ENCODE measurements at regions of chr3 and their contacts with region 1.

Region 1: GRCh38 chr3:52770496-52771333 is at the start of gene NEK4:
- DNase-seq: peak; percentile 85
- ATAC-seq: peak; percentile 91
- H3K4me3 ChIP-seq: peak within 1 kb of the TSS; percentile 52 to 89 (median 72)
- H3K27ac ChIP-seq: peak within 1 kb of the TSS; percentile 80
- H3K4me1 ChIP-seq: peaks cover 60% of the 10 kb centered on the region
- H3K27me3 ChIP-seq: no peaks in the 10 kb centered on the region
- CTCF ChIP-seq: peak; percentile 29
- EP300 ChIP-seq: no peak; a peak in 1 of 4 replicates
- POLR2A ChIP-seq: peak; percentile 85 to 93
- RAD21 ChIP-seq: peak; percentile 83
- total RNA-seq, gene NEK4: 38.0 and 38.5 TPM in 2 replicates

Region 2: DNA sequence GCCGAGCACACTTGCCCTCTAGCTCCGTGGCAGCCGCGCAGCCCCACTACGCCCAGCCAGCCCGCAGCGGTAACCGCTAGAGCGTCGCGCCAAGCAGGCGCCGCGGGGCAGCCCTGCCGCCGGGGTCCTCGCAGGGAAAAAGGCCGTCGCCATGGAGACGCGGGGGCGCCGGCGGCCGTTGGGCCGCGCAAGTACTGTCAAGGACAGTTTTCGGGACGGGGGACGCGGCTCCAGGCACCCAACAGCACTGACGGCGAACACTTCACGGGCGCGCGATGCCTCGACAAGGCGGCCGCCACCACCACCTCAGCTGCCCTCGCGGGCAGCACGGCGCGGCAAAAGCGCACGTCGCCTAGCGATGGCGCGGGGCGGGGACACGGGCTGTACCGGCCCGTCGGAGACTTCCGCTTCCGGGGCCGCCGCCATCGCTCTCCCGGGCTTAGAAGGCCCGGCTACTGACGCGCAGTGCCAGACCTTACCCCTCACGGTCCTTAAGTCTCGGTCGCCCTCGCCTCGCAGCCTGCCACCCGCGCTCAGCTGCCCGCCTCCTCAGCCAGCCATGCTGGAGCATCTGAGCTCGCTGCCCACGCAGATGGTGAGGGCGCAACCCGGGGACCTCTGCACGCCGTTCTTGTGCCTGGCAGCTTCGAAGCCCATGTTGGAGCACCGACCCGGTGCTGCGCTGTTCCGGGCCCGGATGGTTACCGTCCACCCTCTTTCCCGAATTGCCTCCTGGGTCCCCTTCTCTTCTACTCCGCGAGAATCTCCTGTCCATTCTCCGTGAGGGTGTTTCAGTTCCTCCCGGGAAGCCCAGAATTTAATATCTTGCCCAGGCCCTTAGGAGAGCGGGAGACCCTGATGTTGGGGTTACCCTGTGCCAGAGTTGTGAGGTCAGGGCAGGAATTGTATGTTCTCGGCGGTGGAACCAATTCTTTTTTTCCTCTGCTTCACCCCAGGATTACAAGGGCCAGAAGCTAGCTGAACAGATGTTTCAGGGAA is 64.7 kb before region 1 on chr3 and contains the starts of genes GLT8D1 and SPCS1:
- CTCF ChIA-PET with region 1: no interaction called
- POLR2A ChIA-PET with region 1: interaction called, 13 read pairs
- in situ Hi-C with region 1: no loop called
- intact Hi-C with region 1: no loop called
- DNase-seq: peak; percentile 73
- ATAC-seq: peak; percentile 88
- H3K4me3 ChIP-seq: peak within 1 kb of the TSS; percentile 90 to 97 (median 95)
- H3K27ac ChIP-seq: peak within 1 kb of the TSS; percentile 90
- H3K4me1 ChIP-seq: peaks cover 45% of the 10 kb centered on the region
- H3K27me3 ChIP-seq: no peaks in the 10 kb centered on the region; a peak in 1 of 5 replicates
- CTCF ChIP-seq: no peak; the same call in 1 of the 2 replicates
- EP300 ChIP-seq: 0 out of 4 replicates have a peak, but pooled peaks of 1 of the 2 experiments have one; percentile 14
- POLR2A ChIP-seq: peak; percentile 72 to 87
- RAD21 ChIP-seq: peak; percentile 8; the same call in 1 of the 2 replicates
- total RNA-seq, gene GLT8D1: 65.1 and 110 TPM in 2 replicates
- total RNA-seq, gene SPCS1: 100 and 120 TPM in 2 replicates

Region 3: GRCh38 chr3:52787672-52788625 is 17.2 kb after region 1 on chr3:
- CTCF ChIA-PET with region 1: no interaction called
- POLR2A ChIA-PET with region 1: interaction called, 466 read pairs
- in situ Hi-C with region 1: no loop called
- intact Hi-C with region 1: loop called (anchors 1 kb)
- DNase-seq: peak; percentile 23
- ATAC-seq: peak; percentile 68
- H3K4me3 ChIP-seq: peak overlapping the region; percentile 31 to 60 (median 31)
- H3K27ac ChIP-seq: peak overlapping the region; percentile 20
- H3K4me1 ChIP-seq: peaks cover 96% of the 10 kb centered on the region
- H3K27me3 ChIP-seq: no peaks in the 10 kb centered on the region
- CTCF ChIP-seq: peak; percentile 19; the same call in 1 of the 2 replicates
- EP300 ChIP-seq: no peak
- POLR2A ChIP-seq: no peak
- RAD21 ChIP-seq: no peak

Region 4: GRCh38 chr3:52798978-52799476 is 28.3 kb after region 1 on chr3:
- CTCF ChIA-PET with region 1: no interaction called
- POLR2A ChIA-PET with region 1: interaction called, 466 read pairs
- in situ Hi-C with region 1: no loop called
- intact Hi-C with region 1: no loop called
- DNase-seq: peak; percentile 41
- ATAC-seq: peak; percentile 45
- H3K4me3 ChIP-seq: no peak overlapping the region
- H3K27ac ChIP-seq: no peak overlapping the region
- H3K4me1 ChIP-seq: peaks cover 51% of the 10 kb centered on the region
- H3K27me3 ChIP-seq: no peaks in the 10 kb centered on the region
- CTCF ChIP-seq: peak; percentile 74
- EP300 ChIP-seq: no peak
- POLR2A ChIP-seq: no peak
- RAD21 ChIP-seq: peak; percentile 55; the same call in 1 of the 2 replicates

Region 5: DNA sequence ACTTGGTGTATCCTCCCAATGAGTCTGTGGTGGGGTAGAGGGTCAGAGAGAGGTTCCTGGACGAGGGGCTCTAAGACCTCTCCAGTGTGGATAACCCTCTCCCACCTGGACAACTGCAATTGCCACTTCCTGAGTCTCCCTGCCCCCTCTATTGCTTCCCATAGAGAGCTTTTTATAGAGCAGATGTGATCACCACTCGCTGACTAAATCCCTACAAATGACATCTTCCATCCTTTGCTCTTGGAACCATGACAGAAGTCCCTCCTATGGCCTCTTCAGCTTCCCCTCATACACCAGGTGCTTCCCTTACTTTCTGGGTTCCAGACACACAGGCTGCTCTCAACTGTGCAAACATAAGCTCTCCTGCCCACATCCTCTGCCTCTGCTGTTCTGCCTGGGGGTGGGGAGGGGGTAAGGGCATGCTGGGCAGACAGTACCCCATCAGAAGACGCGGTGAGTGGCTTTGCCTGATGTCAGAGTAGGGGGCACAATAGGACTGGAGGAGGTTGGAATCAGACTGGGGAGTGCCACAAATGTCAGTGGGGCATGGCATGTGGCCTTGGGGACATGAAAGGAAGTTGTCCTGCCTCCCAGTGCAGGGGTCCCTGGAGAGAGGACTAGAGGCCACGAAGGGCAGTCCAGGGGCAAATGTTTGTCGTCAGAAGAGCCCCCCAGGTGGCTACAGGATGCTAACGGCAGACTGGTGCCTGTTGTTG is 39.1 kb after region 1 on chr3:
- CTCF ChIA-PET with region 1: no interaction called
- POLR2A ChIA-PET with region 1: interaction called, 10 read pairs
- in situ Hi-C with region 1: no loop called
- intact Hi-C with region 1: no loop called
- DNase-seq: no peak
- ATAC-seq: no peak
- H3K4me3 ChIP-seq: no peak overlapping the region
- H3K27ac ChIP-seq: no peak overlapping the region
- H3K4me1 ChIP-seq: peaks cover 61% of the 10 kb centered on the region
- H3K27me3 ChIP-seq: no peaks in the 10 kb centered on the region
- CTCF ChIP-seq: no peak
- EP300 ChIP-seq: no peak
- POLR2A ChIP-seq: peak in 1 of 2 experiments; percentile 54; a peak in 2 of 4 replicates
- RAD21 ChIP-seq: no peak

Region 6: GRCh38 chr3:52820736-52821135 is 50.0 kb after region 1 on chr3:
- CTCF ChIA-PET with region 1: no interaction called
- POLR2A ChIA-PET with region 1: interaction called, 3 read pairs
- in situ Hi-C with region 1: no loop called
- intact Hi-C with region 1: loop called (anchors 10 kb)
- DNase-seq: peak; percentile 51
- ATAC-seq: peak; percentile 77
- H3K4me3 ChIP-seq: no peak overlapping the region
- H3K27ac ChIP-seq: no peak overlapping the region
- H3K4me1 ChIP-seq: peaks cover 52% of the 10 kb centered on the region
- H3K27me3 ChIP-seq: no peaks in the 10 kb centered on the region
- CTCF ChIP-seq: peak; percentile 92
- EP300 ChIP-seq: no peak
- POLR2A ChIP-seq: no peak
- RAD21 ChIP-seq: peak; percentile 61